ENCODE measurements at regions of chr7 and their contacts with region 1.

Region 1: DNA sequence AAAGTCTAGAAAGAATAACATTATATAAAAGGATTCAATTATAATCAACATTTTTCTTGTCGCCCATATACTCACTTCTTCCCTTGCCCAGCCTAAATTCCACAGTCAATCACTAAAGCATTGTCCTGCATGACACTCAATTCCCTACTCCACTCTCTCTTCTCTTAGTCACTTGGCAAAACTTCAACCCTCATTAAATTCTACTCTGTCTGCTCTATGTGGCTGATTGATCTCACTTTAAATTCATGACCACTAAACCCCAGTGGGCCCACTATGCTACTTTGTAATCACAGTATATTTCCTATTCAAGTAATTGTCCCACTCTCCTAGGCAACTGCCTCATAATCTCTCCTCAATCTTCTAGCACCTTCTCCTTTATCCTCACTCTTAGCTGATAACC is 54.1 kb downstream of the MTERF1 start:
- DNase-seq: no peak
- ATAC-seq: no peak
- H3K4me3 Mint-ChIP-seq: no peak overlapping the region
- H3K27ac Mint-ChIP-seq: no peak overlapping the region
- H3K4me1 Mint-ChIP-seq: no peaks in the 10 kb centered on the region
- H3K27me3 Mint-ChIP-seq: no peaks in the 10 kb centered on the region
- CTCF ChIP-seq: no peak

Region 2: GRCh38 chr7:91880413-91881241 is 54.2 kb after region 1 on chr7 and contains the start of gene MTERF1:
- CTCF ChIA-PET with region 1: interaction called, 10 read pairs
- POLR2A ChIA-PET with region 1: interaction called, 3 read pairs
- intact Hi-C with region 1: no loop called
- DNase-seq: peak; percentile 97
- ATAC-seq: peak; percentile 96
- H3K4me3 Mint-ChIP-seq: peak within 1 kb of the TSS; percentile 88
- H3K27ac Mint-ChIP-seq: peak within 1 kb of the TSS; percentile 98
- H3K4me1 Mint-ChIP-seq: peaks cover 29% of the 10 kb centered on the region
- H3K27me3 Mint-ChIP-seq: no peaks in the 10 kb centered on the region
- CTCF ChIP-seq: peak; percentile 94
- total RNA-seq, gene MTERF1: 15.9 to 16.9 TPM

Measured in activated CD8-positive, alpha-beta T cell treated with anti-CD3 and anti-CD28 coated beads for 36 hours (primary cell).